ENCODE measurements at regions of chr18 and their contacts with region 1.

Region 1: DNA sequence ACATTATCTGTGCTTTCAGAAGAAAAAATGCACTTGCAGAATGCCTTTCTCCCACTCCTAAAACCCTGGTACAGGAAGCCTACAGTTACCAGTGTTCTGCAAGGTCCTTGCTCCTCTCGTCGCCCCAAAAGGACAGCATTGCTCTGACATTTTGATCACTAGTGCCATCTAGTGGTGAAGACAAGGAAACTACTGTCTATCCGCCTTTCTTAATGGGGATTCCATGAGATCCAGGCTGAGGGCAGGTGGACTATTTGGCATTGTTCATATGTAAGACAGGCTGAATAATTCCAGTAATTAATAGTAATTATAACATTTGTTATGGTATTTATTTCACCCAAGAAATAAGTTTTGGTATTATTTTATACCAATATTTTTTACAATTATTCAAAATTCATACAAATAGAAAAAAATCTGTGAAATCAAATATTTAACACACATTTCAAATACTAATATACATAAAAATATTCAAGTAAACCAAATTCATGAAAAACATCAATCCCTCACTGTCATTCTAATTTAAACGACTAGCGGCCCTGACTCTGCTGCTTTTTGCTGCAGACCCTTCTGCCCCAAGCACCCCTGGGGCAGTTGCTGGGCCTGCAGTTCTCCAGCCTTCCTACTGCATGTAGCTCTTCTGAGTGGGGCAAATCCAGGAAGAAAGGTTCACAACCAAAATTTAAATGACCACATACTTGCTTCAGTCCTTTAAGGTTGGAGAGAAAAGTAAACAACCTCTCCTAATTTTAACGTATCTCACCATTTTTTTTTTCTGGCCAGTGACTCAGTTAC is 19.0 kb downstream of the TPGS2 start:
- DNase-seq: peak; percentile 29
- H3K4me3 ChIP-seq: no peak overlapping the region
- CTCF ChIP-seq: peak; percentile 73

Region 2: GRCh38 chr18:36095936-36096519 is 713.8 kb before region 1 on chr18:
- CTCF ChIA-PET with region 1: interaction called, 10 read pairs
- POLR2A ChIA-PET with region 1: no interaction called
- DNase-seq: peak; percentile 53
- H3K4me3 ChIP-seq: no peak overlapping the region
- CTCF ChIP-seq: peak; percentile 24

Region 3: DNA sequence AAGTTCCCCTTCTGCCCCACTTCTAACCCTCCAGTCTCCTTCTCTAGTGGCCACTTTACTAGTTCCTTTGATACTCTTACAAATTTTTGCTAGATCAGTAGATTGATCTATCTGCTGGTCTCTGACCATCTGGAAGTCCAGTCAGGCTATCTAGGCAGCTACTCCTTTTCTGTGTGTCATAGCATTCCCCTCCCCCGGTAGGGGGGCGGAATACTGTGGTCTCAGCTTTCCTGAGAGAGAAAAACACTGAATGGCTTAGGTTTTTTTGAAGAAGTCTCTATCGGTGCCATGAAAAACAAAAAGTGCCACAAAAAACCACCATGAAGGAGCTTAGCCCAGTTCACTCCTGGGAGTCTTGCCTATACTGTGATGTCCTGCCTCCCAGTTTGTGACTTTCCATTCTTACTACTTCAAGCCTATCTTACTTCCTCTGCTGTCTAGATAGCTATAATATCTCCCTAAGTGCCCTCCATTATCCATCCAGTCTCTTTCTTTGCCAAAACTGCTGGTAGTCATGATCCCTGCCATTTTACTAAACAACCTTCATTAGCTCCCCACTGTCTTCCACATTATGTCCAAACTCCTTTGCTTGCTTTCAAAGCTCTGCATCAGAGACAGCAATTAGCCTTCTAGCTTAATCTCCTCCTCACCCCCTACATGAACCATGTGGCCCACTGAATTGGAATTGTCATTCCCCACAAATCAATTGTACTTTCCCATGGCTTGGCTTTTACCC is 10.9 kb before region 1 on chr18:
- CTCF ChIA-PET with region 1: interaction called, 46 read pairs
- POLR2A ChIA-PET with region 1: interaction called, 3 read pairs
- DNase-seq: no peak
- H3K4me3 ChIP-seq: no peak overlapping the region
- CTCF ChIP-seq: no peak

Region 4: GRCh38 chr18:36821681-36822080 is 11.9 kb after region 1 on chr18:
- CTCF ChIA-PET with region 1: interaction called, 25 read pairs
- POLR2A ChIA-PET with region 1: no interaction called
- DNase-seq: no peak
- H3K4me3 ChIP-seq: no peak overlapping the region
- CTCF ChIP-seq: no peak

Region 5: DNA sequence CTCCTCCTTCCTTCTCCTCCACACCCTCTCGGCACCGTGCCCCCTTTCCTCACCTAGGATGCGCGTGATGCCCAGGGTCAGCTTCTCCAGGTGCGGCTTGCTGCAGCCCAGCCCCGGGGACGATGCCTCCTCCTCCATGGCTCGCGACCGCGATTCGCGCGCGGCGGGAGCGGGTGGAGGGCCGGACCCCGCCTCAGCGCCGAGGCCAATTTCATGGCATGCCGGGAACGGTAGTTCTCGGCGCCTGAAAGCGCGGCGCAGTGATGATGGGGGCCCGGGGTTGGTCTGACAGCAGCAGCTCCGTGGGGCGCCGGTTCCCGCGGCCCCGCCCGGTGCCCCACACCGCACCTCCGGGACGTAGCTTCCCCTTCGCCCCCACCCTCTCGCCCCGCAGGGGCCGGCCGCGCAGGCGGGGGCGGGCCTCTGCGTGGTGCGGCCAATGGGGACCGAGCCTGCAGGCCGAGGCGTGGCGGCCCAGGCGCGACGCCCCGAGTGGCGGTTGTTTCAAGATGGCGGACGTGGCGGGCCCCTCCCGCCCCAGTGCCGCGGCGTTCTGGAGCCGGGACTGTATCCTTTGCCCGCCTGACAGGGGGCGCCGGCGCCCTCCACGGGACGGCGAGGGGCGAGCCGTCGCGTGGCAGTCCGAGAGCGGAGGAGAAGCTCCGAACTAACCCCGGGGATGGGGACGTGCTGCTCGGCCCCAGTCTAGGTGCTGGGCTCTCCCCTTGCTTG is 19.0 kb after region 1 on chr18 and contains the starts of genes KIAA1328 and TPGS2:
- CTCF ChIA-PET with region 1: interaction called, 25 read pairs
- POLR2A ChIA-PET with region 1: interaction called, 3 read pairs
- DNase-seq: no peak
- H3K4me3 ChIP-seq: peak within 1 kb of the TSS; percentile 98
- CTCF ChIP-seq: peak; percentile 75